ENCODE measurements at regions of chr7 and their contacts with region 1.

Region 1: GRCh38 chr7:79176859-79177477 is 276.5 kb downstream of the MAGI2 start:
- DNase-seq: peak in 1 of 2 donors; percentile 7
- ATAC-seq: peak in 4 of 8 donors; percentile 54 to 61 (median 57)
- H3K4me3 ChIP-seq: no peak overlapping the region
- H3K27ac ChIP-seq: no peak overlapping the region
- H3K4me1 ChIP-seq: peaks cover 0 to 3% (median 0%) of the 10 kb centered on the region in 9 donors
- H3K27me3 ChIP-seq: no peaks in the 10 kb centered on the region
- CTCF ChIP-seq: peak; percentile 15 to 75 (median 54)

Region 2: DNA sequence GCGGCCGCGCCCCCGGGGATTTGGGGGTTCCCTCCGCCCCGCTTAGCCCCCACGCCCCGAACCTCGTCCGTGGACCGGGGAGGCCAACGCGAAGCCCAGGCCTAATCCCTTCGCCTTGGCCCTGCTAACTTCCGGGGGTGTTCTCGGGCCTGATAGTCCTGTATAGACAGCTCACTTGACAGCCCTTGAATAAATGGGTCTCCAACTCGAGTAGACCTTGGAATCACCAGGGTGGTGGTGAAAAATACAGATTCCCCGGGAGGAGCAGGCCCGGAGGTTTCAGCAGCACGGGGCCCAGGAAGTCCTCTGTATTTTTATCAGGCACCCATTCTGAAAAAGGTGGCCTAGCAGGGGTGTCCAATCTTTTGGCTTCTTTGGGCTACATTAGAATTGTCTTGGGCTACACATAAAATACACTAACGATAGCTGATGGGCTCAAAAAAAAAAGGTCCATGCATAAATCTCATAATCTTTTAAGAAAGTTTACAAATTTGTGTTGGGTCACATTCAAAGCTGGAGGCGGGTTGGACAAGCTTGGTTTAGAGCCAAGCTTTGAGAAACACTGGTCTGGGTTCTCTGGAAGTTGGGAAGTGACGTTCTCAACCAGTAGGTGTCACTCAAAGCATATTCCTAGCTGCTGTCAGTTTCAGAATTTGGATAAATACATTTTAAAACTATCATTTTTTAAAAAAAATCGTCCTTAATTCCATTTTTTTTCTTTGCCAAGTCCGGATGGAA is 1156.7 kb before region 1 on chr7:
- intact Hi-C with region 1: loop called in 2 of 10 experiments (anchors 5 to 10 kb)
- DNase-seq: peak in 1 of 2 donors; percentile 82
- ATAC-seq: peak; percentile 73 to 88 (median 81)
- H3K4me3 ChIP-seq: peak overlapping the region; percentile 22 to 66 (median 60)
- H3K27ac ChIP-seq: peak overlapping the region; percentile 93 to 98 (median 96)
- H3K4me1 ChIP-seq: peaks cover 0 to 48% (median 24%) of the 10 kb centered on the region in 9 donors
- H3K27me3 ChIP-seq: peaks cover 0 to 17% (median 0%) of the 10 kb centered on the region in 7 donors
- CTCF ChIP-seq: peak; percentile 66 to 92 (median 80)

Region 3: DNA sequence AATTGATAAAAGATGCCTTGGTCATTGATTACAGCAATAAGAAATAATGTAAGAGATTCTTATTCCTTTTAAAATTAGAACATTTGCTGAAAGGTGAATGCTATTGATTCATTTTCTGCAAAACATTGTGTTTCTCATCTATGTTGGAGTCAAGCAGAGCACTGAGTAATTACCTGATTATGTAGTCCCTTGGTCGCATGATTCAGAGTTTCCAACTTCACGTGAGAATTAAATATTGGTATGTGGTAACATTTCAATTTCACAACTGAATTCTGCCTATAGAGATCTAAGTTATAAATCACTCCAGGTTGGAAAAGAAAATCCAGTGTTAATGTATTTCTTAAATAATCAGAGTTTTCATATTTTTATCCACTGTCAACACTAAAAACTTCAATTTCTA is 677.0 kb before region 1 on chr7:
- intact Hi-C with region 1: loop called in 1 of 10 experiments (anchors 10 kb)
- DNase-seq: no peak
- ATAC-seq: no peak
- H3K4me3 ChIP-seq: no peak overlapping the region
- H3K27ac ChIP-seq: no peak overlapping the region
- H3K4me1 ChIP-seq: no peaks in the 10 kb centered on the region
- H3K27me3 ChIP-seq: no peaks in the 10 kb centered on the region
- CTCF ChIP-seq: no peak

Region 4: GRCh38 chr7:78510580-78511188 is 666.3 kb before region 1 on chr7:
- intact Hi-C with region 1: loop called in 3 of 10 experiments (anchors 5 to 10 kb)
- DNase-seq: peak in 1 of 2 donors; percentile 6
- ATAC-seq: peak in 1 of 8 donors; percentile 29
- H3K4me3 ChIP-seq: no peak overlapping the region
- H3K27ac ChIP-seq: no peak overlapping the region
- H3K4me1 ChIP-seq: no peaks in the 10 kb centered on the region
- H3K27me3 ChIP-seq: no peaks in the 10 kb centered on the region
- CTCF ChIP-seq: peak in 8 of 9 donors; percentile 5 to 67 (median 52)

Region 5: DNA sequence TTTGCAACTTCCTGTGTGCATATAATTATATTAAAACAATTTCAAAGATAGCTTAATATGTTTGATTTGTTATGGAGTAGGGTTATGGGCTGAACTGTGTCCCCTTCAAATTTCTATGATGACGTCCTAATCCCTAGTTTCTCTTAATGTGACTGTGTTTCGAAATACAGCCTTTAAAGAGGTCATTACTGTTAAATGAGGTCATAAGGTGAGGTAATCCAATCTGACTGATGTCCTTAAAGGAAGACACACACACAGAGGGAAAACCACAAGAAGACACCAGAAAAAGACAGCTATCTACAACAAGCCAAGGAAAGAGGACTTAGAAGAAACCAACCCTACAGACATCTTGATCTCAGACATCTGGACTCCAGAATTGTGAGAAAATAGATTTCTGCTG is 130.9 kb before region 1 on chr7:
- intact Hi-C with region 1: no loop called
- DNase-seq: no peak
- ATAC-seq: no peak
- H3K4me3 ChIP-seq: no peak overlapping the region
- H3K27ac ChIP-seq: no peak overlapping the region
- H3K4me1 ChIP-seq: no peaks in the 10 kb centered on the region
- H3K27me3 ChIP-seq: no peaks in the 10 kb centered on the region
- CTCF ChIP-seq: no peak

Region 6: GRCh38 chr7:79434098-79434497 is 257.1 kb after region 1 on chr7:
- intact Hi-C with region 1: no loop called
- DNase-seq: no peak
- ATAC-seq: no peak
- H3K4me3 ChIP-seq: no peak overlapping the region
- H3K27ac ChIP-seq: no peak overlapping the region
- H3K4me1 ChIP-seq: no peaks in the 10 kb centered on the region
- H3K27me3 ChIP-seq: no peaks in the 10 kb centered on the region
- CTCF ChIP-seq: no peak

Region 7: DNA sequence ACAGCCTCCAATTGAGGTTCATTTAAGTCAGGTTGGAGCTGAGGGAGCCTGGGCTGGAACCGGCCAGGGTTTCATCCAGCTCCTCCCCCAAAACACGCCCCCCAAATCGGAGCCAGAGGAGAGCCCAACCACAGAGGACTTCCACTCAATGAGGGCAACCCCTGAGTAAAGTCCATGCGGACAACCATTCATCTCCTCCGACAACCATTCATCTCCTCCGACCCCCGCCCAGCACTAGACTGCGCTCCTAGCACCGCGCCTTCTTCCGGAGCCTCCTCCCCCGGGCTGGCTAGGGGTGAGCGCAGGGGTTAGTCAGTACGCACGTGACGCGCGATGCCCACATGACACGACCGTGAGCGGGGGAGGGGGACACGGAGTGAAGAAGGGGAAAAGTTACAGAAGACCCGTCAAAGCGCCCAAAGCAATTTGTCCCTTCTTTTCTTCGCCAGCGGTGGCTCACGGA is 275.1 kb after region 1 on chr7:
- intact Hi-C with region 1: no loop called
- DNase-seq: peak; percentile 84 to 86
- ATAC-seq: peak; percentile 79 to 93 (median 86)
- H3K4me3 ChIP-seq: peak overlapping the region; percentile 64 to 95 (median 83)
- H3K27ac ChIP-seq: peak overlapping the region; percentile 87 to 98 (median 93)
- H3K4me1 ChIP-seq: peaks cover 4 to 36% (median 18%) of the 10 kb centered on the region in 9 donors
- H3K27me3 ChIP-seq: peaks cover 0 to 41% (median 0%) of the 10 kb centered on the region in 7 donors
- CTCF ChIP-seq: no peak

Measured in heart right ventricle (tissue), 16 donors.